Right cardiac atrium (tissue), 5 donors: ENCODE measurements at regions of chr9 and their contacts with region 1.

Region 1: GRCh38 chr9:137233143-137233980 is 2.7 kb downstream of the SLC34A3 start:
- DNase-seq: no peak
- ATAC-seq: no peak
- H3K4me3 ChIP-seq: no peak overlapping the region
- H3K27ac ChIP-seq: no peak overlapping the region
- H3K4me1 ChIP-seq: no peaks in the 10 kb centered on the region
- H3K27me3 ChIP-seq: no peaks in the 10 kb centered on the region

Region 2: DNA sequence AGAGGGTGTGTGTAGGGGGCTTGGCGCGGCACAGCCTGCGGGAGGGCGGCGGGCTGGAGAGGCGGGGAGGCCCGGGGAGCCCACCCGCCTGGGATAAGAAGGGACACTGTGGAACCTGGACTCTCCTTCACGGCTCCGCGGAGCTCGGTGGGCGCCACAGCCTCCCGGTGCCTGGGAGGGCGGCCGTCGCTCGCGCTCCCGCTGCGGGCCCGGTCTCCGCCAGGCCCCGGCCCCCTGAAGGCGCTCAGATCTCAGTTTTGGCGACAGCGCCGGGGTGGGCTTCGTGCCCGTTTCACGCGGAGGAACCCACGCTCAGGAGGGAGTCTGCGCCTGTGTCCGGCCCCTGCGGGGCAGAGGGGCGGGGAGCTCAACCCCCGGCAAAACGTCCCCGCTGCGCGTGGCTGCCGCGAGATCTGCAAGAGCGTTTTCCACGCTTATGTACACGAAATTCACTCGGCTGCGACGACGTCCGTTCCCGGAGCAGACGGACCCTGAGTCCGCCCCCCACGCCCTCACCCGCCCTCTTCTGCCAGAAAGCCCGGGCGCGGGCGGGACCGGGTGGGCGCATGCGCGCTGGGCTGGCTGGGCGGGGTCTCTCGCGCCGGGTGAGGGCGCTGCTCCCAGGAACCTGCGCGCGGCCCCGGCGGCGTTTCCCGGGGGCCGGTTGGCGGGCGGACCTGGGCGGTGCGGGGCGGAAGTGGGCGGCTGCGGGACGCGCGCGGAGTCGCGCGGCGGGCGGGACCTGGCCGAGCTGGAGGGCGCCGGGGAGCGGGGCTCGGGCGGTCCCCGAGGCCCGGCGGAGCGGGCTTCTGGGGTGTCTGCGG is 21.5 kb after region 1 on chr9 and contains the start of gene NELFB:
- intact Hi-C with region 1: loop called in 1 of 4 experiments (anchors 2 kb)
- DNase-seq: peak; percentile 95 to 98 (median 98)
- ATAC-seq: peak; percentile 86 to 89
- H3K4me3 ChIP-seq: peak within 1 kb of the TSS; percentile 90
- H3K27ac ChIP-seq: peak within 1 kb of the TSS; percentile 46
- H3K4me1 ChIP-seq: peaks cover 7% of the 10 kb centered on the region
- H3K27me3 ChIP-seq: no peaks in the 10 kb centered on the region
- total RNA-seq, gene NELFB: 34.8 to 38.6 (median 37.1) TPM